Heart left ventricle (tissue), 16 donors: ENCODE measurements at regions of chr11 and their contacts with region 1.

Region 1: GRCh38 chr11:20647976-20648565 is 21.3 kb upstream of the NELL1 start:
- DNase-seq: no peak
- ATAC-seq: peak in 3 of 4 donors; percentile 41 to 56 (median 47)
- H3K4me3 ChIP-seq: no peak overlapping the region
- H3K27ac ChIP-seq: no peak overlapping the region
- H3K4me1 ChIP-seq: no peaks in the 10 kb centered on the region
- H3K27me3 ChIP-seq: peaks cover 0 to 14% (median 0%) of the 10 kb centered on the region in 9 donors
- CTCF ChIP-seq: peak; percentile 68 to 90 (median 86)
- POLR2A ChIP-seq: no peak

Region 2: DNA sequence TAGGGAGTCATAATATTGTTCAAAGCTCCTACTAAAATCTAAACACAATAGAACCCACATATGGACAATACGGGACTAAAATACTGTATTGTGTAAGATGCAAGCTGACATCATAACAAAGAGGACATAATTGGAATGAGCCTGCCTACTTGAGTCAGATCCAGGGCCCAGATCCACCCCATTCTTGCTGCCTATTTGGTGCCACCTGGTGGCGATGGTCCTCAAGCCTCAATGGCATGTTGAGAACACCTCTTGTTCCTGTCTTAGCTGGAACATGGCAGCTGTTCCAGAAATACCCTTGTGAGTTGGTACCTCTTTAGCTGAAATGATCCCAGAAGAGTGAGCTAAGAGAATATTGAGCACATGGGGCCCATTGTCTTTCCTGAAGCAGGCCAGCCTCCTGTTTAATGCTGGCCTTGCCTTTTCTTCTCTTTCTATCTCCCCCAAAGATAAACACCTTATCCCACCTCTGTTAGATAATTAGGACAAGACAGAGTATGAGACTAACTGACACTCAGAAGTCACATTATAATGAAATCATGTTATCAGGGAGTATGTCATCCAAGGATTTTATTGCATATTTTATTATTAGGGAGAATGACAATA is 863.9 kb after region 1 on chr11:
- intact Hi-C with region 1: loop called in 2 of 10 experiments (anchors 5 kb)
- DNase-seq: peak in 2 of 5 donors; percentile 7 to 32
- ATAC-seq: no peak
- H3K4me3 ChIP-seq: no peak overlapping the region
- H3K27ac ChIP-seq: no peak overlapping the region
- H3K4me1 ChIP-seq: no peaks in the 10 kb centered on the region
- H3K27me3 ChIP-seq: no peaks in the 10 kb centered on the region
- CTCF ChIP-seq: peak in 9 of 12 donors; percentile 8 to 42 (median 26)
- POLR2A ChIP-seq: no peak

Region 3: GRCh38 chr11:22130462-22131053 is 1482.5 kb after region 1 on chr11:
- intact Hi-C with region 1: loop called in 7 of 10 experiments (anchors 5 to 10 kb)
- DNase-seq: no peak
- ATAC-seq: peak in 3 of 4 donors; percentile 39 to 47 (median 45)
- H3K4me3 ChIP-seq: no peak overlapping the region
- H3K27ac ChIP-seq: no peak overlapping the region
- H3K4me1 ChIP-seq: no peaks in the 10 kb centered on the region
- H3K27me3 ChIP-seq: no peaks in the 10 kb centered on the region
- CTCF ChIP-seq: peak; percentile 28 to 60 (median 47)
- POLR2A ChIP-seq: no peak

Region 4: DNA sequence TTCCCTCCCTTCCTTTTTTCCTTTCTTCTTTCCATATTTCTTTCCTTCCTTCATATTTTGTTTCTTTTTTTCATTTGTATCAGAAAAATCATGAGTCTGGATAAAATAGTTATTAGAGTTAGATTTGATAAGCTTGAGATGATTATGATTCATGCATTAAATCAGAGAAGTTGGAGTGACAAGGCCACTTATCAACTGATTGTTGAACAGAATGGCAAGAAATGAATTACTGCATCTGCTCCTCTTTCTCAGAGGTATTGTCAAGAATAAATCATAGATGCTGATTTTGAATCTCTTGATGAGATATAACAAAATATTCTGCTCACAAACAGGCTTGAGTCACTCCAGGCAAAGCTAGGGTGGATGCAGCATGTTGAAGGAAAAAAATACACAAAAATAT is 1490.2 kb after region 1 on chr11:
- intact Hi-C with region 1: loop called in 7 of 10 experiments (anchors 5 to 10 kb)
- DNase-seq: no peak
- ATAC-seq: no peak
- H3K4me3 ChIP-seq: no peak overlapping the region
- H3K27ac ChIP-seq: no peak overlapping the region
- H3K4me1 ChIP-seq: no peaks in the 10 kb centered on the region
- H3K27me3 ChIP-seq: no peaks in the 10 kb centered on the region
- CTCF ChIP-seq: no peak
- POLR2A ChIP-seq: no peak

Region 5: GRCh38 chr11:22151649-22152197 is 1503.7 kb after region 1 on chr11:
- intact Hi-C with region 1: loop called in 1 of 10 experiments (anchors 5 kb)
- DNase-seq: no peak
- ATAC-seq: no peak
- H3K4me3 ChIP-seq: no peak overlapping the region
- H3K27ac ChIP-seq: no peak overlapping the region
- H3K4me1 ChIP-seq: no peaks in the 10 kb centered on the region
- H3K27me3 ChIP-seq: peaks cover 0 to 3% (median 0%) of the 10 kb centered on the region in 9 donors
- CTCF ChIP-seq: no peak
- POLR2A ChIP-seq: no peak

Region 6: GRCh38 chr11:22304337-22304961 is 1656.4 kb after region 1 on chr11:
- intact Hi-C with region 1: loop called in 8 of 10 experiments (anchors 2 to 10 kb)
- DNase-seq: no peak
- ATAC-seq: no peak
- H3K4me3 ChIP-seq: no peak overlapping the region
- H3K27ac ChIP-seq: no peak overlapping the region
- H3K4me1 ChIP-seq: no peaks in the 10 kb centered on the region
- H3K27me3 ChIP-seq: peaks cover 0 to 11% (median 0%) of the 10 kb centered on the region in 9 donors
- CTCF ChIP-seq: peak; percentile 56 to 81 (median 68)
- POLR2A ChIP-seq: no peak